ENCODE measurements at regions of chr22 and their contacts with region 1.

Region 1: DNA sequence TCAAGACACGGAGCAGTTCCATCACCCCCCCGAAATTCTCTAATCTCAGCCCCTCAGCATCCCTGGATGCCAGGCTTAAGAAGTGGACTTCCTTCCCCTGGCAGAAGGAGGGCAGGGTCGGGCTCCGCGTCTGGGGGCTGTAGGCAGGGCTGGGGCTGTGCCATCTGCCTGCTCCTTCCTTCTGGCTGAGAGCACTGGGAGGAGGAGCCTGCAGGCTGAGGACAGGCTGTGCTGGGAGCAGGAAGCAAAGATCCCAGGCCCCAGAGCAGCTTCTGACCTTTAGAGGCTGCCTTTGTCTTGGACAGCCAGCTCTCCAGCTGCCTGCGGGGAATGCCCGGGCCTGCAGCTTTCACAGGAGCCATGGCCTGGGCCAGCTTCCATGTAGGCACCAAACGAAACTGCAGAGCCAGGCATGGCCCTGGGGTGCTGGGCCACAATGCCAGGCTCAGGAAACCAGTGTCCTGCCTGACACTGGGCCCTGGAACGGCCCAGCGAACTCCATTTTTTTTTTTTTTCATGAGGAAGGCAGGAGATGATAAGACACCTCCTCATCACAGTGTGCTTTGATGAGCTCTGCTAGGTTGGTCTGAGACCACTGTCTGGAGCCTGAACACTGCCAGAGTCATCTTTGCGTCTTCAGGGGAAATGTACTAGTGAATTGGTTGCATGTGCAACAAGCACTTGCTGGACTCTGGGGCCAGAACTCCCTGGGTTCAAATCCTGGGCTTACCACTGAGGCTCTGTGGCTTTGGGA is 67.9 kb downstream of the MCM5 start:
- DNase-seq: peak in 1 of 2 donors; percentile 79
- H3K4me3 ChIP-seq: no peak overlapping the region
- H3K27ac ChIP-seq: peak overlapping the region; percentile 59 to 72
- H3K4me1 ChIP-seq: peaks cover 0 to 8% of the 10 kb centered on the region in 2 donors
- H3K27me3 ChIP-seq: no peaks in the 10 kb centered on the region
- CTCF ChIP-seq: no peak

Region 2: GRCh38 chr22:35539910-35540594 is 72.2 kb after region 1 on chr22:
- intact Hi-C with region 1: loop called (anchors 5 kb)
- DNase-seq: peak in 1 of 2 donors; percentile 72
- H3K4me3 ChIP-seq: peak overlapping the region; percentile 66 to 71
- H3K27ac ChIP-seq: peak overlapping the region; percentile 77 to 84
- H3K4me1 ChIP-seq: peaks cover 10 to 14% of the 10 kb centered on the region in 2 donors
- H3K27me3 ChIP-seq: no peaks in the 10 kb centered on the region
- CTCF ChIP-seq: peak in 1 of 3 experiments; percentile 1